ENCODE measurements at regions of chr10 and their contacts with region 1.

Region 1: GRCh38 chr10:13776861-13777311 is 190.1 kb downstream of the PRPF18 start:
- DNase-seq: no peak
- ATAC-seq: no peak
- H3K4me3 ChIP-seq: no peak overlapping the region
- H3K27ac ChIP-seq: no peak overlapping the region
- H3K4me1 ChIP-seq: peaks cover 4 to 8% of the 10 kb centered on the region in 2 donors
- H3K27me3 ChIP-seq: no peaks in the 10 kb centered on the region
- CTCF ChIP-seq: no peak
- POLR2A ChIP-seq: no peak

Region 2: DNA sequence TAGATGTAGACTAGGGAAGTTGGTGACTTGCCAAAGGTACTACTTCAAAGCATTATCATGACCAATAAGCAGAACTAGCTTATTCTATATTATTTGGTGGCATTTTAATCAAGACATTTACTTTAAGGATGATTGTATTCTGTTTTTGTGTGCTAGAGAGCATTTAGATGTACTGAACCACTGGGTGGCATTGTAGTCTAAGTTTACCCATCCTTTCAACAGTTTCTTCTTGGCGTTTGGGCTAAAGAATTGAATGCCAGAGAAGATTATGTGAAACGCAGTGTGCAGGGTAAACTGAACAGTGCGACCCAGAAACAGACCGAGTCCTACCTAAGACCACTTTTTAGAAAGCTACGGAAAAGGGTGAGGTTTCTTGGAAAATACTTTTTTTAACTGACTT is 163.4 kb before region 1 on chr10:
- in situ Hi-C with region 1: no loop called
- intact Hi-C with region 1: loop called (anchors 2 kb)
- DNase-seq: no peak
- ATAC-seq: peak; percentile 47 to 58
- H3K4me3 ChIP-seq: no peak overlapping the region
- H3K27ac ChIP-seq: no peak overlapping the region
- H3K4me1 ChIP-seq: peaks cover 30 to 33% of the 10 kb centered on the region in 2 donors
- H3K27me3 ChIP-seq: no peaks in the 10 kb centered on the region
- CTCF ChIP-seq: peak in 4 of 5 experiments; percentile 26 to 31 (median 30)
- POLR2A ChIP-seq: no peak

Region 3: GRCh38 chr10:13649844-13650521 is 126.9 kb before region 1 on chr10:
- in situ Hi-C with region 1: loop called in 3 of 4 experiments (anchors 5 to 10 kb)
- intact Hi-C with region 1: no loop called
- DNase-seq: no peak
- ATAC-seq: no peak
- H3K4me3 ChIP-seq: no peak overlapping the region
- H3K27ac ChIP-seq: no peak overlapping the region
- H3K4me1 ChIP-seq: no peaks in the 10 kb centered on the region
- H3K27me3 ChIP-seq: no peaks in the 10 kb centered on the region
- CTCF ChIP-seq: no peak
- POLR2A ChIP-seq: no peak

Region 4: DNA sequence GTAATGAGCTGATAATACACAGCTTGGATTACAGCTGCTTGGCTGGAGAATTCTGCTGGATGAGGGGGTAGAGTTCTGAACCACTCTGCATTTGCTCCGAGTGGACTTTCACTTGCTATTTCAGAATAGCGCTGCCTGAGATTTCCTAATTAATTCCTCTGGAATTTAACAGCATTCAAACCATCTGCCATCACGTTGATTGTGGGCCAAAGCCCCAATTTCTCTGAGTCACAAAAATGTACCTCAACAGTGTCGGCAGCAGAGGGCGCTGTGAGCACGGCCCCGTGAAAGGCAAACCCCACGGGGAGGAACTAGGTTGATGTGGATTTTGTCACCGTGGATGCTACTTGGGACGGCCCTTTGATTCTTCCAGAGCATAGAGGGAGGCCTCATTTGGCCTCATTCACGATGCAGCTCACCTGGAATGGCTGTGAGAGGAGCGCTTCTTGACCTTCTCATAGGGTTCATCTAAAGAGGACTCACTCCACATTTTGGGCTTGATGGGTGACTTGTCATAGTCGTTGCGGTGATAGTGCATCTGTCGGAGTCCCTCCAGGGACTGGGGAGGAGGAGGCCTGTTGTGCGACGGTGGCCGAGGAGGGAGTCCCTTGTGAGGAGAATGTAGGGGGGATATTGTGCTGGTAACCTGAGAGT is 116.9 kb before region 1 on chr10:
- in situ Hi-C with region 1: loop called in 3 of 4 experiments (anchors 5 to 10 kb)
- intact Hi-C with region 1: loop called (anchors 1 kb)
- DNase-seq: peak in 1 of 2 donors; percentile 43
- ATAC-seq: peak; percentile 55 to 67
- H3K4me3 ChIP-seq: no peak overlapping the region
- H3K27ac ChIP-seq: peak overlapping the region in 2 of 4 donors; percentile 4 to 18
- H3K4me1 ChIP-seq: peaks cover 5 to 11% of the 10 kb centered on the region in 2 donors
- H3K27me3 ChIP-seq: no peaks in the 10 kb centered on the region
- CTCF ChIP-seq: peak; percentile 76 to 90 (median 83)
- POLR2A ChIP-seq: no peak

Measured in gastrocnemius medialis (tissue), 4 donors.